RWPE1 (cell line): ENCODE measurements at regions of chr4 and their contacts with region 1.

Region 1: GRCh38 chr4:112189754-112190153 is 41.8 kb upstream of the AP1AR start:
- DNase-seq: no peak
- H3K27ac ChIP-seq: no peak overlapping the region
- CTCF ChIP-seq: peak; percentile 13; the same call in 1 of the 2 replicates

Region 2: DNA sequence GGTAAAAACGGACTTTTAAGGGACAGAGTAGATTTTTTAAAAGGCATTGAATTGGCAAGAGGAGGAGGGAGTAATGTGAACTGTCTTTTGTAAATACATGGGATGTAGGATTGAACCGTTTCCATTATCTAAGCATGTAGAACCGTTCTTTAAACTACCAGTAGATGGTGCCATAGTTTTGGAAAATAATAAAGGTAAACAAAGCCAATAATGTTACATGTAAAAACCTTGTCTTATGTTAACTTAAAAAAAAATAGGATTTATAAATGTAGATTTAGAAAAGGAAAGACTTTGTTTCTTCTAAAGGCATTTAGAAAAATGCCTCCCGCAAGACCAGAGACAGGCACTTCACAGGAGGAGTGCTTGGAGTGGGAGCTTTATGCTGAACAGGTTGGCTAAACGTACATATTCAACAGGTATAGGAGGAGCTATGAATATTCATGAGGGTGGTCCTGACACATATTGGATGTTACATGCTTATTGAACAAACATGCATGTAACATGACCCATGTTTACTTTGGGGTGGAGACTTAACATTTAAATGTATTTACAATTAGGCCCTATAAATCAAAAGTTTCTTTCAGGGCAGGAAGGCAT is 90.0 kb before region 1 on chr4:
- CTCF ChIA-PET with region 1: interaction called, 11 read pairs
- POLR2A ChIA-PET with region 1: no interaction called
- DNase-seq: peak; percentile 50
- H3K27ac ChIP-seq: no peak overlapping the region
- CTCF ChIP-seq: peak; percentile 67